ENCODE measurements at regions of chr3 and their contacts with region 1.

Region 1: DNA sequence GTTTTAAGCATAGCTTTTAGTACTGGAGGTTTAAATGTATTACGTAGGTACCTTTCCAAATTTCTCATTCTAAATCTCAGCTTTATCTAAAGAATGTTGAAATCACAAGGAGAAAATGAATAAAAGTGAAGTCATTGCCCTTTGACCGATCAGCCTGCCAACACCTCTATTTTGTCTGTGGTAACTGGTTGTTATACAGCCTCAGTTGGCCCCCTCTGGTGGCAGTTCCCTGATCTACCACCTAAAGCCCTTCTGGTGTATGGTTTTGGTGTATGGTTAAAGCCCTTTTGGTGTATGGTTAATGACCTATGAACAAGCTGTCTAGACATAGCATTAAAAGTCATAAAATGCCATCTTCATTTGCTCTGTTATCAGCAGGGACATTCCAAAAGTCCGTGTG is 378.2 kb upstream of the AZI2 start:
- DNase-seq: peak; percentile 31
- H3K4me3 ChIP-seq: no peak overlapping the region
- H3K27ac ChIP-seq: no peak overlapping the region
- H3K4me1 ChIP-seq: no peaks in the 10 kb centered on the region
- H3K27me3 ChIP-seq: no peaks in the 10 kb centered on the region
- CTCF ChIP-seq: peak; percentile 60 to 75

Region 2: DNA sequence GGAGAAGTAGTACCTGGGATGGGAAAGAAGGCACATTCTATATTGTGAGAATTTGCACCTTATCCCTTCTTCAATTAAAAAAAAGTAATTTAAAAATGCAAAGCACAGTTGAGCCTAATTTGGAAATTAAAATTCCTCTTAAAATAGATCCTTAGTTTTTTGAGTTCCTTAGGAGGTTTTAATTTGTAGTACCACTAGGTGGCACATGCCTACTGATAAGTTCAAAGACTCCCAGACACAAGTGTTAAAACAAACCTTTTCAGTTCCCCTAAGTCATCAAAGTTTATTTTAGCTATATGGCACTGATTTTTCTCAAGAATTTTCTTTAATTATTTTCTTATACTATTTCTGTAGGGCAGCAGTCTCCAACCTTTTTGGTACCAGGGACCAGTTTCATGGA is 250.6 kb before region 1 on chr3:
- CTCF ChIA-PET with region 1: no interaction called
- dilution Hi-C with region 1: no loop called
- in situ Hi-C with region 1: no loop called
- intact Hi-C with region 1: loop called (anchors 1 kb)
- DNase-seq: peak; percentile 9
- H3K4me3 ChIP-seq: no peak overlapping the region
- H3K27ac ChIP-seq: no peak overlapping the region
- H3K4me1 ChIP-seq: no peaks in the 10 kb centered on the region
- H3K27me3 ChIP-seq: no peaks in the 10 kb centered on the region
- CTCF ChIP-seq: peak; percentile 51 to 62

Region 3: DNA sequence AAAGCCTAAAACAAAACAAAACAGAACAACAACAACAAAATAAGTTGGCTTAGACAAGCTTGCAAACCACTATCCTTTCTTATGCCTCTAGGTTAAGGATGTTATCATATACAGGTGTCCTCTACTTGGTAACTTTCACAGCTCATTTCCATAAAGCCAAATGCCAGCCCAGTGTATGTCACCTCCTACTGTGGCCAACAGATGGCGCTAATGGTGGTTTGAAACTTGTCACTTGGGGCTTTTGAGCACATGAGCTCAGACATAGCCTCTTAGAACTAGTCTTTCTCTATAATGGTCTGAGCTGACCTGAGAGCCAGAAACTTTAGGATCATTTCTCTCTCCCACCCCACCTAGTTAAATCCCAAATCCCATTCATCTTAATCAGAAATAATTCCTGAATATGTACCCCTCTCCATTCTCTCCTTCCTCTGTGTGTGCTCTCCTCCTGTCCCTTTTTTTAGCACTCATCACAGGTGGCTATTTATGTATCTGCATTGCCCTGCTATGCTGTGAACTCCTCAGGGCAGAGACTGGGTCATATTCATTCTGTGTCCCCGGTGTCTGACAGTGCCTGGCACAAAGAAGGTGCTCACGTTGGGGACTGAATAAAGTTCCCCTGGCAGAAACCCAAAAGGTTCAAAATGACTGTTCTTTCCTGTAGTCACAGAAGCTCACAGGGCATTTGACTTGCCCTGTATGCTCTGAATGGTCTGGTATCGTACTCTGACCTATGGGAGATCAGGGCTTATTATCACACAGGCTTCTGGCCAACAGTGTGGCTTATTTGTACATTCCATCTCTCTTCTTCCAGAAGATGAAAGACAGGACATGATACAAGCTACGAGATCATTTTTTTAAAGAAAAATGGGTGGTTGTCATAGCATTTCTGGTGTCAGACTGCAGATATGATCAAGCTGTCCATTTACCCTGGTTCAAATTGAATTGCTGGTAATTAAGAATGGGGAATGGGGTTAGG is 58.9 kb before region 1 on chr3:
- CTCF ChIA-PET with region 1: interaction called, 5 read pairs
- dilution Hi-C with region 1: no loop called
- in situ Hi-C with region 1: no loop called
- intact Hi-C with region 1: loop called (anchors 5 kb)
- DNase-seq: peak; percentile 50
- H3K4me3 ChIP-seq: no peak overlapping the region
- H3K27ac ChIP-seq: no peak overlapping the region
- H3K4me1 ChIP-seq: no peaks in the 10 kb centered on the region
- H3K27me3 ChIP-seq: no peaks in the 10 kb centered on the region
- CTCF ChIP-seq: peak; percentile 82 to 88

Region 4: GRCh38 chr3:29186982-29187725 is 460.3 kb after region 1 on chr3:
- CTCF ChIA-PET with region 1: no interaction called
- dilution Hi-C with region 1: no loop called
- in situ Hi-C with region 1: no loop called
- intact Hi-C with region 1: no loop called
- DNase-seq: peak; percentile 94
- H3K4me3 ChIP-seq: no peak overlapping the region
- H3K27ac ChIP-seq: peak overlapping the region; percentile 87
- H3K4me1 ChIP-seq: peaks cover 27% of the 10 kb centered on the region
- H3K27me3 ChIP-seq: no peaks in the 10 kb centered on the region
- CTCF ChIP-seq: no peak